ENCODE measurements at regions of chr5 and their contacts with region 1.

Region 1: DNA sequence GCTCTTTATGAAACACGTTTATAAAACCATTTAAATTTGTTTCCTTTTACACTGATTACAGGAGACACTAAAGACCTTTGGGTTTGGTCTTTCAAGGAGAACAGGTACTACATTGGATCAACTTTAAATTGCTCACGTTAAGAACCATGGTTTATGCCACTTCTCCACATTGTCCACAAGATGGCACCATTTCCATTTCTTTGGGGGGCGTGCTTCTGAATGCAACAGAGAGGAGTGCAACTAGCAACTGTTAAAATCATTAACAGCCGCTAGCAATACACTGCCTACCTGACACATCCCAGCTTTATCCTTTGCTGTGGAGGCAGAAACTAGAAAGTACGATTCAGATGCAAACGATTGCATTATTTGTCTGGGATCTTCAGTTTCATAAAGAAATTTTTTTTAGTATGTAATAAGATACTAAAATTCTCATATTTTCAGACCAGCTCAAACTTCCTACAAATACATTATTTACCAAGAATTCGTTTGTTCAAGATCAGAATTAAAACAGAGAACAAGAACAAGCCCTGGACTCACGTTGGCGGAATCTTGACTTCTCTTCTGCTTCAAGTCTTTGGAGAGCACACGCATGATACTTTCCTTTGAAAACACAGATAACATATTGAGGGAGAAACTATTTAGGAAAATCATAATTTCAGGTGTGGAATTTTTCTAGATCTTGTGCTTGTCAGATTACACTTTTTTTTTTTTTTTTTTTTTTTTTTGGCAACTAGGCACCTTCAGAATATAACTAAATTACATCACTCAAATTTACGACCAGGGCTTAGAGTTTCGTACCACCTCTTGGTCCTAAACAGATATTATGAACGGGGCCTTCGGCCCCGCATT is 702 bp downstream of the CDC20B start:
- DNase-seq: peak in 1 of 2 donors; percentile 39
- H3K4me3 ChIP-seq: peak overlapping the region; percentile 48 to 57
- H3K27ac ChIP-seq: no peak overlapping the region
- H3K4me1 ChIP-seq: peaks cover 0 to 32% (median 26%) of the 10 kb centered on the region in 4 donors
- H3K27me3 ChIP-seq: peaks cover 0 to 45% of the 10 kb centered on the region in 2 donors
- CTCF ChIP-seq: peak; percentile 77 to 80

Region 2: DNA sequence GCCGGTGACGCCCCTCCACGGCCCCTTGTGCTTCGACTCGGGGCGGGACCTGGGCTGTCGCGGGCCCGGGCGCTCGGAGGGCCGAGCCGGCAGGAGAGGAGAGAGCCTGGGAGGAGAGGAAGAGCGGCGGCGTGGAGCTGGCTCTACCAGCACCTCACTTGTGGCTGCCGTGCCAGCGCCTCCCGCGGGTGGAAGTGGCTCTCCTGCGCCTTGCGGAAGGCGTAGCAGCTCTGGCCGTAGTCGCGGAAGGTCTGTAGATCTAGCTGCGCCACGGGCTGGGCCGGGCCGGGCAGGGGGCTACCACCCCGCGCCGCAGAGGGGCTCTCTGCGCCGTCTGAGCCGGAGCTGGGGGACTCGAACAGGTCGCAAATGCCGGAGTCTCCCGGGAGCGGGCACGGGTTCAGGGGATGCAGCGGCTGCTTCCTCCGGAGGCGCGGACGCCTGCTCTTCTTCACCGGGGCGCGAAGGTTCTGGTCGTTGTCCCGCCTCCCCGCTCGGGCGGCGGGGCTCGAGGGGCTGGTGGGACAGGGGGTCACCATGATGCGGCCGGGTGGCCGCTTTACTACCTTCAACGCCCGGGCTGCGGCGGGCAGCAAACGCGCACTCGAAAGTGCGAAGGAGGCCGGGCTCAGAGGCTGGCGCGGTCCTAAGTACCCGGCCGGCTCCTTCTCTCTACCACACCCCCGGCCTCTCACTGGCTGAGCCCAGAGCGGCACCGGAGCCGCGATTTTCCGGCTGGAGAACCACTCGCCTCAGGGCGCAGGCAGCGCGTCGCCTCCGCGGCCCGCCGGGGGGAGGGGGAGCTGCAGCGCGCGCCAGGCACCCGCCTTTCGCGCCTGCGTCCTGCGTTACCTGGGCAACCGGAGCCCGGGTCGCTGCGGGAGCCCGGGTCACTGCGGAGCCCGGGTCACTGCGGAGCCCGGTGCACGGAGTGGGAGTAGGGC is 61.0 kb after region 1 on chr5 and contains the start of gene CCNO:
- intact Hi-C with region 1: loop called (anchors 5 kb)
- DNase-seq: peak; percentile 71 to 86
- H3K4me3 ChIP-seq: peak within 1 kb of the TSS; percentile 58 to 60
- H3K27ac ChIP-seq: peak within 1 kb of the TSS; percentile 56 to 66
- H3K4me1 ChIP-seq: peaks cover 0 to 29% (median 26%) of the 10 kb centered on the region in 4 donors
- H3K27me3 ChIP-seq: peaks cover 0 to 68% of the 10 kb centered on the region in 2 donors
- CTCF ChIP-seq: no peak